WTC11 (cell line): ENCODE measurements at regions of chr19 and their contacts with region 1.

Region 1: DNA sequence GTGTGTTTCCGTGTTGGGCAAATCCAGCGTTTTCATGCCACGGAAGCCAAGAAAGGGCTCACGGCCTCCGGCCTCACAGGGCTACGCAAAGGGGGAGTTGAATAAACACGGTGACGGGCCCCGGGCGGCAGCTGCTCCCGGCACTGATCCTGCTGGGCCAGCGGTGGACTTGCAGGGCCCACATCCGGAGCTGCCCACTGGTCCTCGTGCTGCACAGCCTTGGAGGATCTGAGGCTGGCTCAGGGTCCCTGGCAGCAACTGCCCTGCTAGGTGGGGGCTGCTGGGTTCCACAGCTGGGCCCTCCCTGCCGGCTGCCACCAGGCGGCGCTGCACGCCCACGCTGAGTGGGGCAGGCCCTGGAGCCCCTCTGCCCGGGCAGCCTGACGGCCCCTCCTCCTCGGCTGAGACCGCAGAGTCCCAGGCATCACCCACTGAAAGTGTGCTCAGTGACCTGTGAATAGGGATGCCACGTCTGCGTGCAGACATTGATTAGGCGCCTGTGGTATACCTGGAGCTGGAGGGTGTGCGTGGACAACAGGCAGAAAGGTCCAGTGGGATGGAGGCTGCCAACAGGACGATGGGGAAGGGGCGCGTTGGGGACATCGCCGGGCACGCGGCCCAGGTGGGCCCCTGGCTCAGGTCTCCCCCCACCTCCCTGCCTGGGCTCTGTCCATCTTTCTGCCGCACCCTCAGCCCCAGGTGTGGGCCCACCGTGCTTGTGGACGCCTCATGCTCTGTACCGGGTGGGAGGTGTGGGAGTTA is 5.3 kb upstream of the HCN2 start:
- DNase-seq: peak; percentile 87
- ATAC-seq: peak; percentile 75
- H3K4me3 Mint-ChIP-seq: no peak overlapping the region
- H3K27ac Mint-ChIP-seq: no peak overlapping the region; the same call in 1 of the 2 replicates
- H3K4me1 Mint-ChIP-seq: peaks cover 4% of the 10 kb centered on the region; the same call in 1 of the 2 replicates
- H3K27me3 Mint-ChIP-seq: peaks cover 14% of the 10 kb centered on the region
- CTCF ChIP-seq: peak; percentile 95

Region 2: GRCh38 chr19:531009-531752 is 53.2 kb before region 1 on chr19:
- CTCF ChIA-PET with region 1: interaction called, 10 read pairs
- POLR2A ChIA-PET with region 1: no interaction called
- DNase-seq: peak; percentile 82
- ATAC-seq: peak; percentile 79
- H3K4me3 Mint-ChIP-seq: peak overlapping the region; percentile 76
- H3K27ac Mint-ChIP-seq: 0 out of 2 replicates have a peak overlapping the region, but pooled peaks have one; percentile 70
- H3K4me1 Mint-ChIP-seq: peaks cover 10% of the 10 kb centered on the region
- H3K27me3 Mint-ChIP-seq: peaks cover 9% of the 10 kb centered on the region
- CTCF ChIP-seq: no peak

Region 3: DNA sequence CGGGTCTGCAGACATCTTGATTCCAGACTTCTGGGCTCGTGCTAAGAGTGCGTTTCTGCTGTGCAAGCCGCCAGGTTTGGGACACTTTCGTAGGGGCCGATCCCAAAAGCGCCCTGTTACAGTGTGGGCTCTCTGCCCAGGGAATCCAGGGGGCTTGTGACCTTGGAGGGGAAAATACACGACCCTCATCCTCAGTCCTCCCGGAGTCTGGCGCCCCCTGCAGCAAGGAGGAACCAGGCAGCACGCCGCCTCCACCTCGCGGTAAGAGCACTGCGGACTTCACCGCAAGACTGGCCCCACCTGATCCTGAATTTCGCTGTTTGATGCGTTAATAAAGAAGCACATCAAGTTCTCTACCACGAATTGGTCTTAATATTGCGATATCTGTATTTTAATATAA is 43.7 kb after region 1 on chr19:
- CTCF ChIA-PET with region 1: interaction called, 10 read pairs
- POLR2A ChIA-PET with region 1: no interaction called
- DNase-seq: peak; percentile 80
- ATAC-seq: peak; percentile 59
- H3K4me3 Mint-ChIP-seq: no peak overlapping the region
- H3K27ac Mint-ChIP-seq: peak overlapping the region; percentile 60; the same call in 1 of the 2 replicates
- H3K4me1 Mint-ChIP-seq: peaks cover 6% of the 10 kb centered on the region
- H3K27me3 Mint-ChIP-seq: no peaks in the 10 kb centered on the region
- CTCF ChIP-seq: peak; percentile 76